ENCODE measurements at regions of chr19 and their contacts with region 1.

Region 1: GRCh38 chr19:46030812-46031550 is 8.1 kb upstream of the PGLYRP1 start:
- DNase-seq: no peak
- H3K4me3 ChIP-seq: no peak overlapping the region
- H3K27ac ChIP-seq: no peak overlapping the region
- H3K27me3 ChIP-seq: peaks cover 0 to 2% (median 0%) of the 10 kb centered on the region in 45 donors
- CTCF ChIP-seq: no peak

Region 2: DNA sequence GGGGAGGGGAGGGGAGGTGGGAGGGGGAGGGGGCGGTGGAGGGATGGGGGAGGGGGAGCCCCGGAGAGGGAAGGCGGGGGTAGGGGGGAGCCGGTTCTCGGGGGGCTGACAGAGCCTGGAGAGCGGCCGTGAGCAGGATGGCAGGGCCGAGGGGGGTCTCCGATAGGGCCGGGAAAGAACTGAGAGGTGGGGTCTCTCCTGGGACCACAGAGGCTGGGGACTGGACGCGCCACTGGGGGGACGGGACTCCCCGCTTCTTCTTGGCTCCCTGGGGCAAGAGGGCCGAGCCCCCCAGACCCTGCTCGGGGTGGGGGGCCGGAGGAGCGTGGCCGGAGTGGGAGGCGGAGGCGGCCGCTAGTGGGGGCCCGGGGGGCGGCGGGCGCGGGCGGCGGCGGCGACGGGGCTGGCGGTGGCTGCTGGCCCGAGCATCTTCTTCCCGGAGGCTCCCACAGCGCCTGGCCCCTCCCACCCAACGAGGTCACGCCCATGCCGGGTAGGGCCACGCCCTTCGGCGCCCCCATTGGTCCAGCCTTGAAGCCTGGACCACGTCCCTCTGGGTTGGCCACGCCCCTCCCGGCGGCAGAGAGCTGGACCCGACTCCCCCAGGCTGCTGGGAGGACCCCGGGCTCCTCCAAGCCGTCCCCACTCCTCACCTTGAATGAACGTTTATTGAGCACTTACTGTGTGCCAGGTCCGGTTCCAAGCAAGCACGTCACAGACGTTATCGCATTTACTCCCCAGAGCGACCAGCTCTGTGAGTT is 57.2 kb before region 1 on chr19 and contains the start of gene NOVA2:
- intact Hi-C with region 1: no loop called
- DNase-seq: peak; percentile 85 to 96 (median 94)
- H3K4me3 ChIP-seq: peak within 1 kb of the TSS; percentile 42 to 80 (median 67)
- H3K27ac ChIP-seq: peak within 1 kb of the TSS in 56 of 59 donors; percentile 0 to 97 (median 86)
- H3K27me3 ChIP-seq: no peaks in the 10 kb centered on the region
- CTCF ChIP-seq: peak in 11 of 56 donors; percentile 8 to 39 (median 16)
- total RNA-seq, gene NOVA2: 41.1 to 95.4 (median 71.8) TPM

Region 3: DNA sequence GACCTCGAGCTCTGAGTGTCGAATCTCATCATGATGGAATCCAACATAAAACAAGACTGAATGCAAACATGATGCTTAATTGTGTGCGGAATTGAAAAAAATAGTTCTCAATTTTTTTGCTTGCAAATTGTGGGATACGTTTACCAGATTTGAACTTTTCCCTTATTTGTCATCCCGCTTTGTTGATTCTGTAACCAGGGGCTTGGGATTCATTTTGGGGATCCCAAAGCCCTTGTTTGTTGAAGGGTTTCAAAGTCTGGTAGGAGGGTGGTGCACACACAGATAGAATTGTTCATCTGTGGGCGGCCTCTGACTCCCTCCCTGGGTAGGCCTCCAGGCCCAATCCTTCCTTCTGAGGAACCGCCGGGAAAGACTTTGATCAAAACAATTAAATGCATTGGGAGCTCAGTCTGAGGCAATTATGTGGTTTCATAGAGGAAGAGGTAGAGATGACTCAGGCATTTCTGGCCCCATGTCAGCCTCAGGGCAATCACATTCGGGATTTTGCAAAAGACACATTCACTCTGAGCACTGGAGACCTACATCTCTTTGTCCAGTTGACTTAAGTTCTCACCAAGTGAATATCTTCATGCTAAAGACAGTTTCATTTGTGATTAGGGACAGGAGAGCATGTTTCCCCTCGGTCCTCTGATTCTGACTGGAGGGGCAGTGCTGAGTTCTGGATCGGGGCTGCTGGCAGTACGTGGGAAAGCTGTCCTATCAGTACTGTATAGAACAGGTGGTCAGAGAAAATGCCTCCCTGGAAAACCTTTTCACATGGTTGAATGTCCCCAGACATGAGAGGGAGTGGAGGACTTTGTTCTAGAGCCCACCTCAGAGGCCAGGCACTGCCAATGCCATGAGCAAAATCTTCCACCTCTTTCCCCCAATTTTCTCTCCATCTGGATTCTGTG is 37.6 kb after region 1 on chr19:
- intact Hi-C with region 1: loop called in 1 of 2 experiments (anchors 5 kb)
- DNase-seq: no peak
- H3K4me3 ChIP-seq: no peak overlapping the region
- H3K27ac ChIP-seq: no peak overlapping the region
- H3K27me3 ChIP-seq: no peaks in the 10 kb centered on the region
- CTCF ChIP-seq: no peak

Measured in dorsolateral prefrontal cortex (tissue), 120 donors.